RWPE1 (cell line): ENCODE measurements at regions of chr20 and their contacts with region 1.

Region 1: DNA sequence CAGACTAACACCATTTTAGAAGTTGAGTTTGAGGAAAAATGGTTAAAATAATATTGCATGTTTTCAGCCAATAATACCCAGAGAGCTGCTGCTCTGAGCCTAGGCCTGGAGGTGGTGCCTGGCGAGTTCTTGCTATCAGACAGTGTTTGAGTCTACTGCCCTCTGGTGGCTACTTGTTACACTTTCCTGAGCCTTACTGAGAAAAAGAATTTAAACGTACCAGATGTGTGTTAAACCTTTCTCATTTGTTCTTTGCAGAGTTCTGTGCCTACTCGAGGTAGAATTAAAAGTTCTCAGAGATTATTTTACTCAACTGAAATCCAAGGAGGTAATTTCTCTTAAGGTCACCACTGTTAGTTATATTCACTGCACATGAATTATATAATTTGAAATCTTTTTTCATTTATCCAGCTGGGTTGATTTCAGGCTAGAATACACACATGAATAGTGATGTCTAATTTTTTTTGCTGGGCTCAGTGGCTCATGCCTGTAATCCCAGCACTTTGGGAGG is 38.2 kb downstream of the SHLD1 start:
- DNase-seq: peak; percentile 82
- H3K27ac ChIP-seq: no peak overlapping the region
- CTCF ChIP-seq: peak; percentile 96

Region 2: DNA sequence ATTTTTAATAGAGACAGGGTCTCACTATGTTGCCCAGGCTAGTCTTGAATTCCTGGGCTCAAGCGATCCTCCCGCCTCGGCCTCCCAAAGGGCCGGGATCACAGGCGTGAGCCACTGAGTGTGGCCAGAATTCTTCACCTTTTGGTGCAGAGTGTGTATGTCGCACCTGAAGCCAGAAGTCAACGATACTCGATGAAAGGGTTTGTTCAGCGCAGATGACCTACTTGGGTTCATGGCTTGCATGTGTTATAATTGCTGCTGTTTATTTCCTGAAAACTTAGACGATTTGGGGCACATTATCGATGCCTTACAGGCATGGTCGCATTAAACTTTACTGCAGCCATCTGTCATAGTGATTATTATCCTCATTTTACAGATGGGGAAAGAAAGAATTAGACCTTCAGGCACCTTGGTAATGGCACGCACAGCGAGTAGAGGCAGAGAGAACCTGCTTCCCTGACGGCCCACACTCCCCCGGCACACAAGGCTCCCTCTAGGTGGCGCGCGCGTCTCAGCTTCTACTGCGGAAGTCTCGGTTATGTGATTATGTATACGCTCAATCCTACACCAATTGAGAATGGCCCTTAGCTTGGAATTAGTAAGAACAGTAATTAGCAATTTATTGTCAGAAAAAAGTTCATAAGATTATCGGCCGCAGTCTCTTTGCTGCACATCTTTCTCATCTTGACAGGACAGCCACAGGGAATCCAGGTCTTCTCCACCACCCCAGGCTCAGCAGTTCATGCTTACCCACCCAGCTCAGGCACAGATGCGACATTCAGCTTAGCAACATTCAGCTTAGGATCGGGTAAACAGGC is 258.9 kb before region 1 on chr20:
- CTCF ChIA-PET with region 1: interaction called, 52 read pairs
- POLR2A ChIA-PET with region 1: no interaction called
- DNase-seq: peak; percentile 74
- H3K27ac ChIP-seq: peak overlapping the region; percentile 14
- CTCF ChIP-seq: peak; percentile 90

Region 3: DNA sequence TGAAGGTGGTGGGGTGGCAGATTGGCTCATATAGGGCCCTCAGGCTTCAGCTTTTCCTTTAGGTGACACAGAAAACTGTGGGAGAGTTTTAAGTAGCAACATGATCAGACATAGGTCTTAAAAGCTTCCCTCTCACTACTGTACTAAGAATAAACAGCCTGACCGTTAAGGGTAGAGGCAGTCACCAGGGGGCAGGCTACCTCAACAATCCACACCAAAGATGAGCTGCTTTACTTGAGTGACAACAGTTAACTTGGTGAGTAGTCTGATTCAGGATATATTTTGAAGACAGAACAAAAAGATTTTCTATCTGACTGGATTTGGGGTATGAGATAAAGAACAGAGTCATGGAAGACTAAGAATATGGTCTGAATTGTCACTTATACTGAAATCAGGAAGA is 231.3 kb before region 1 on chr20:
- CTCF ChIA-PET with region 1: interaction called, 15 read pairs
- POLR2A ChIA-PET with region 1: no interaction called
- DNase-seq: peak; percentile 36
- H3K27ac ChIP-seq: no peak overlapping the region
- CTCF ChIP-seq: peak; percentile 68

Region 4: DNA sequence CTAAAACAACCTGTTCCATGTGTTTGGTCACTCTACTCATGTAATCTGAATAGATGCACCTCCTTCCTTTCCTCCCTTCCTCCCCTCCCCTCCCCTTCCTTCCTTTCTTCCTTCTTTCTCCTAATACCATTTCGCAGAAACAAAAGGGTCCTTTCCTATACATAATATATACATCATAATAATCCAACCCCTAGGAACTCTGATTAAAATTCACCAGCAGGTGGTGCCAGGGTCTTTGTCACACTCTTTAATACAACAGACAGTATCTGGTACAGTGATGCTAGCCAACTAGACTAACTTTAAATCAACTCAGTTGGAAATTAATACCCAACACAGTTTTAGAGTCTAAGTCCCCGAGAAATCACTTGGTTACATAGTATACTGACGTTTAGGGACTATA is 219.4 kb before region 1 on chr20:
- CTCF ChIA-PET with region 1: interaction called, 16 read pairs
- POLR2A ChIA-PET with region 1: no interaction called
- DNase-seq: peak; percentile 46
- H3K27ac ChIP-seq: no peak overlapping the region
- CTCF ChIP-seq: peak; percentile 76

Region 5: DNA sequence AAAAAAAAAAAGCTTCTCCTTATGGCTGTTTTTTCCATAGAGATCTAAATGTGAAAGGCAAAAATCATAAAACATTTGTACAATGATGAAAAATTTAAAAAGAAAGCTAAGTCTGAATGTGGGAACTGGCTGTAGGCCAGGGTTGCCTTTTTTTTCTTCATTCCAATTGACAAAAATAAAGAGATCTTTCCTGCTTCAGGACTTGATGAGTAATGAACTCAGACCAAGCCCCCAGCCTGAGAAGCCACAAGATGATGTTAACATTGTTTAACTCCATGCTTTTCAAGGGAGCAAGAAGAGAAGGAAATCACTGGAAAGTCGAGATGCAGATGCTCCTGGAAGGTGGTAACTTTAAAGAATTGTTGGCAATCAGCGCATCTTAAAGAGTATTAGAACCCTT is 120.5 kb after region 1 on chr20:
- CTCF ChIA-PET with region 1: no interaction called
- POLR2A ChIA-PET with region 1: no interaction called
- DNase-seq: no peak
- H3K27ac ChIP-seq: no peak overlapping the region
- CTCF ChIP-seq: no peak